ENCODE measurements at regions of chr1 and their contacts with region 1.

Region 1: GRCh38 chr1:157992031-157992832 is 1.2 kb upstream of the KIRREL1 start:
- DNase-seq: peak in 4 of 6 donors; percentile 33 to 75 (median 65)
- ATAC-seq: peak; percentile 71 to 86 (median 80)
- H3K4me3 ChIP-seq: no peak overlapping the region
- H3K27ac ChIP-seq: no peak overlapping the region
- H3K4me1 ChIP-seq: no peaks in the 10 kb centered on the region
- H3K27me3 ChIP-seq: peaks cover 0 to 5% (median 0%) of the 10 kb centered on the region in 4 donors
- CTCF ChIP-seq: peak; percentile 57 to 86 (median 83)

Region 2: GRCh38 chr1:157963713-157964112 is 28.5 kb before region 1 on chr1:
- intact Hi-C with region 1: loop called in 1 of 3 experiments (anchors 2 kb)
- DNase-seq: peak; percentile 30 to 80 (median 56)
- ATAC-seq: peak; percentile 51 to 71 (median 68)
- H3K4me3 ChIP-seq: no peak overlapping the region
- H3K27ac ChIP-seq: no peak overlapping the region
- H3K4me1 ChIP-seq: peaks cover 0 to 8% (median 5%) of the 10 kb centered on the region in 3 donors
- H3K27me3 ChIP-seq: no peaks in the 10 kb centered on the region
- CTCF ChIP-seq: peak; percentile 78 to 94 (median 86)

Region 3: GRCh38 chr1:158087320-158087927 is 95.2 kb after region 1 on chr1:
- intact Hi-C with region 1: loop called in 1 of 3 experiments (anchors 10 kb)
- DNase-seq: peak in 2 of 6 donors; percentile 13 to 54
- ATAC-seq: peak in 3 of 4 donors; percentile 65 to 85 (median 71)
- H3K4me3 ChIP-seq: no peak overlapping the region
- H3K27ac ChIP-seq: no peak overlapping the region
- H3K4me1 ChIP-seq: no peaks in the 10 kb centered on the region
- H3K27me3 ChIP-seq: no peaks in the 10 kb centered on the region
- CTCF ChIP-seq: peak in 3 of 4 donors; percentile 51 to 77 (median 74)

Measured in pancreas (tissue), 10 donors.